Activated CD4-positive, alpha-beta memory T cell treated with anti-CD3 and anti-CD28 coated beads for 36 hours (primary cell): ENCODE measurements at regions of chr1 and their contacts with region 1.

Region 1: GRCh38 chr1:101309334-101310311 is 72.8 kb downstream of the S1PR1 start:
- DNase-seq: peak; percentile 77
- H3K4me3 Mint-ChIP-seq: peak overlapping the region; percentile 69
- H3K27ac Mint-ChIP-seq: peak overlapping the region; percentile 78
- H3K4me1 Mint-ChIP-seq: peaks cover 74% of the 10 kb centered on the region
- H3K27me3 Mint-ChIP-seq: no peaks in the 10 kb centered on the region

Region 2: GRCh38 chr1:101293461-101294051 is 16.1 kb before region 1 on chr1:
- CTCF ChIA-PET with region 1: interaction called, 61 read pairs
- POLR2A ChIA-PET with region 1: interaction called, 5 read pairs
- intact Hi-C with region 1: loop called (anchors 1 kb)
- DNase-seq: peak; percentile 82
- H3K4me3 Mint-ChIP-seq: peak overlapping the region; percentile 33
- H3K27ac Mint-ChIP-seq: peak overlapping the region; percentile 78
- H3K4me1 Mint-ChIP-seq: peaks cover 80% of the 10 kb centered on the region
- H3K27me3 Mint-ChIP-seq: no peaks in the 10 kb centered on the region

Region 3: DNA sequence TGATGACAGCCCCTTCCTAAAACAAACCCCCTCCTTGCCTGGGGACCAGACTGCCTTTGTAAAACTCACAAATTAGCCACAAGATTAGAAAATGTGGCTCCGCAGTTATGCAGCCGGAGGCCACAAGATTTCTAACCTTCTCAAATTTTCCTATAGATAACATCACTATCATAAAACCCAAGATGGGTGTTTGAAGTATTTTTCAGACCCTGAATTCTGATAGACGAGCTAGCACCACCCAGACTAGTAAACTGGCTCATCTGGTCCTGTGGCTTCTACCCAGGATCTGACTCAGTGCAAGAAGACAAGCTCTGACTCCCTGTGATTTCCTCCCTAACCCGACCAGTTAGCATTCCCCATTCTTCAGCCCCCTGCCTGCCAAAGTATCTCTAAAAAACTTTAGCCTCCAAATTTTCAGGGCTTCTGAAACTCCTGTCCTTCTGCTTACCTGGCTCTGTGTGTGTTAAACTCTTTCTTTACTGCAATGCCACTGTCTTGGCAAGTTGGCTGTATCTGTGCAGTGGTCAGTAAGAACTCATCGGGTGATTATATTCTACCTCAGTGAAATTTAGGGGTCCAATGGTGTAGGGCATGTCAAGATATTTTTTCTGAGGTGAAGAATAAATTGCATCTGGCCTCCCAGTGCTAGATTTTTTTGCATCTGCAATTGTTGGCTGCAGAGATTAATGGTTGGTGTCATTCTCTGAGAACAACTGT is 29.2 kb after region 1 on chr1:
- CTCF ChIA-PET with region 1: interaction called, 18 read pairs
- POLR2A ChIA-PET with region 1: no interaction called
- intact Hi-C with region 1: no loop called
- DNase-seq: peak; percentile 42
- H3K4me3 Mint-ChIP-seq: no peak overlapping the region
- H3K27ac Mint-ChIP-seq: peak overlapping the region; percentile 19
- H3K4me1 Mint-ChIP-seq: peaks cover 8% of the 10 kb centered on the region
- H3K27me3 Mint-ChIP-seq: no peaks in the 10 kb centered on the region

Region 4: GRCh38 chr1:101357444-101357986 is 47.9 kb after region 1 on chr1:
- CTCF ChIA-PET with region 1: interaction called, 203 read pairs
- POLR2A ChIA-PET with region 1: interaction called, 5 read pairs
- intact Hi-C with region 1: loop called (anchors 1 kb)
- DNase-seq: peak; percentile 73
- H3K4me3 Mint-ChIP-seq: no peak overlapping the region
- H3K27ac Mint-ChIP-seq: peak overlapping the region; percentile 36
- H3K4me1 Mint-ChIP-seq: peaks cover 8% of the 10 kb centered on the region
- H3K27me3 Mint-ChIP-seq: no peaks in the 10 kb centered on the region

Region 5: GRCh38 chr1:101438359-101438758 is 128.7 kb after region 1 on chr1:
- CTCF ChIA-PET with region 1: interaction called, 11 read pairs
- POLR2A ChIA-PET with region 1: no interaction called
- intact Hi-C with region 1: loop called (anchors 2 kb)
- DNase-seq: no peak
- H3K4me3 Mint-ChIP-seq: no peak overlapping the region
- H3K27ac Mint-ChIP-seq: no peak overlapping the region
- H3K4me1 Mint-ChIP-seq: no peaks in the 10 kb centered on the region
- H3K27me3 Mint-ChIP-seq: no peaks in the 10 kb centered on the region

Region 6: DNA sequence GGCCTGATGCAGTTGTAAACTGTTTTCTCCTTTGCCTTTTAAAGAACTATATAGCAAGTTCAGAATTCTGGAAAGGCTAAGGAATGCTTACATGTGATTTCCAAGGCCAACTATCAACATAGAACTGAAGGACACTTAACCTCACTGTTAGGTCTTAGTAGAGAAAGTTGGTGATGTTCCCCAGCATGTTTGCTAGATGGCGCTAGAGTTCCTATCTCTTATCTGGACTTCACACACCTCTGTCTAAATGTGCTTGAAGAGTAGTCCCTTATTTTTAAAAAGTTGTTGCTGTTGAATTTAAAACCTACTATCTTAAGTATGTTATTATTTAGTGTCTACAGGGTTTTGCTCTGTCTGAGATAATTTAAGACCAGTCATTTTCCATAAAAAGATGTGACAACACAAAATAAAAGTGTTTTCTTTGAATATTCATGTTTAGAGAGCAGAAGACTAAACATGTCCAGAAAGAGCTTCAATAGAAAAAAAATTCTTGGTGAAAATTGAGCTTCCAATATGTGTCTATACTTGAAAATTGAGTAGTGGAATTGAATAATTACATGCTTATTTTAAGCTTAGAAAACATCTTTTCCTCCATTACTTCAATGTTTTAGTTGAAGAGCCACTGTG is 164.5 kb after region 1 on chr1:
- CTCF ChIA-PET with region 1: interaction called, 13 read pairs
- POLR2A ChIA-PET with region 1: no interaction called
- intact Hi-C with region 1: no loop called
- DNase-seq: no peak
- H3K4me3 Mint-ChIP-seq: no peak overlapping the region
- H3K27ac Mint-ChIP-seq: no peak overlapping the region
- H3K4me1 Mint-ChIP-seq: no peaks in the 10 kb centered on the region
- H3K27me3 Mint-ChIP-seq: peaks cover 2% of the 10 kb centered on the region

Region 7: DNA sequence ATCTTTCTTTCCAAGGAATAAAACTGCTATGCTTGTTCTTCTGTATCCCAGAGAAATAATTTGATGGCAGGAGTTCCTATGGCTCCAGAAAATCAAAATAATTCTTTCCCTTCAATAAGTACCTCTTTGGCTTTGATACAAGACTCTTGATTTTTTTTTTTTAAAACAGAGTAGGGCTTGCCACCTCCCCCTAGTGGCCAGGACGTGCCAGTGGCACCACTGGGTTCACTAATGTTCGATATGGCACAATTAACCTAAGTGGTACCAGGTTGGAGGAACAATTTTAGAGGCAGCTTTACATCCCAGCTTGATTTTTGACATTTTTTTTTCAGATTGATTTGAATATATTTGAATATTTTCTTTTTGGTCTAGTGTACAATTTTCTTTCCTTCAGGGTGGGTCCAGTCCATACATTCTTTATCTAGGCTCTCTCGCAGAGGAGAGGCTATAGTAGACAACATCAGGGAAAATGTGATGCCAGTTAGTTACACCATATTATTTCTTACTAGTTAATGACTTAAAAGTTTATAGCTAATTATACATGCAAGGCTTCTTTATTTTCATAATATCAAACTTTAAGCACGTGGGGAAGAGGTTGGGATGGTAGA is 258.1 kb after region 1 on chr1:
- CTCF ChIA-PET with region 1: interaction called, 4 read pairs
- POLR2A ChIA-PET with region 1: no interaction called
- intact Hi-C with region 1: loop called (anchors 5 kb)
- DNase-seq: peak; percentile 50
- H3K4me3 Mint-ChIP-seq: no peak overlapping the region
- H3K27ac Mint-ChIP-seq: no peak overlapping the region
- H3K4me1 Mint-ChIP-seq: no peaks in the 10 kb centered on the region
- H3K27me3 Mint-ChIP-seq: peaks cover 2% of the 10 kb centered on the region